B cell (primary cell): ENCODE measurements at regions of chr19 and their contacts with region 1.

Region 1: DNA sequence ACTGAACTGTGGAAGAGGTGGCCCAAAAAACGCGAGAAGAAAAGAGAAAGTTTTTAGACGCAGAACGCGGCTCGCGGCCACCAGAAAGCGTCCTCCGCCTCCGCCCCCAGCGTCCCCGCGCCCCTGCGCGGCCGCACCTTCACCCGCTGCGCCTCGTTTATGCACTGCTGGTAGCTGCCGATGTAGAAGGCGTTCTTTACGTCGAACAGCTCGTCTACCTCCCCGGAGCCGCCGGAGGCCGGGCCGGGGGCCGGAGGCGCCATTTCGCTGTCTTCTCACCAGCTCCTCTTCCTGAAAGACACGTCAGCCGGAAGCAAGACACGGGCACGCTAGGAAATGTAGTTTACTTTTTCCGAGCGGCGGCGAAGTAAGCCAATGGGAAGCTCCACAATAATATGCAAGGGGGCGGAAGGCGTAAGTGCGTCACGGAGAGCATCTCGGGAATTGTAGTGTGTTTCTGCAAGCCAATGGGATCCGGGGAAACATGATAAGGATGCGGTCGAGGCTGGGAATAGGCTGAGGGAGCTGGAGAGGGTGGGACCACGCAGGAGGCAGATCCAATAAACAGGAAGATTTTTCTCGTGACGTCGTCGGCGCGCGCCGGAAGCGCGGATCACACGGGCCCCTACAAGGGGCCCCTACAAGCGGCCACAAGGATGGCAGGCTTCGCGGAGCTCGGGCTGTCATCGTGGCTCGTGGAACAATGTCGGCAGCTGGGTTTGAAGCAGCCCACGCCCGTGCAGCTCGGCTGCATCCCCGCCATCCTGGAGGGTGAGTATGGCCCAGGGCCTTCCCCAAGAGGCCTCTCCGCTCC is at the starts of genes COPE and DDX49:
- DNase-seq: peak; percentile 100
- ATAC-seq: peak; percentile 97
- H3K4me3 ChIP-seq: peak within 1 kb of the TSS; percentile 93 to 100 (median 97)
- H3K4me3 Mint-ChIP-seq: peak within 1 kb of the TSS; percentile 83
- H3K27ac ChIP-seq: peak within 1 kb of the TSS; percentile 84 to 93
- H3K27ac Mint-ChIP-seq: peak within 1 kb of the TSS; percentile 80
- H3K4me1 ChIP-seq: peaks cover 17 to 27% of the 10 kb centered on the region in 2 donors
- H3K4me1 Mint-ChIP-seq: peaks cover 41% of the 10 kb centered on the region
- H3K27me3 ChIP-seq: no peaks in the 10 kb centered on the region
- H3K27me3 Mint-ChIP-seq: no peaks in the 10 kb centered on the region
- CTCF ChIP-seq: no peak
- total RNA-seq, gene COPE: 153 and 154 TPM in 2 replicates
- total RNA-seq, gene DDX49: 38.9 and 39.5 TPM in 2 replicates

Region 2: DNA sequence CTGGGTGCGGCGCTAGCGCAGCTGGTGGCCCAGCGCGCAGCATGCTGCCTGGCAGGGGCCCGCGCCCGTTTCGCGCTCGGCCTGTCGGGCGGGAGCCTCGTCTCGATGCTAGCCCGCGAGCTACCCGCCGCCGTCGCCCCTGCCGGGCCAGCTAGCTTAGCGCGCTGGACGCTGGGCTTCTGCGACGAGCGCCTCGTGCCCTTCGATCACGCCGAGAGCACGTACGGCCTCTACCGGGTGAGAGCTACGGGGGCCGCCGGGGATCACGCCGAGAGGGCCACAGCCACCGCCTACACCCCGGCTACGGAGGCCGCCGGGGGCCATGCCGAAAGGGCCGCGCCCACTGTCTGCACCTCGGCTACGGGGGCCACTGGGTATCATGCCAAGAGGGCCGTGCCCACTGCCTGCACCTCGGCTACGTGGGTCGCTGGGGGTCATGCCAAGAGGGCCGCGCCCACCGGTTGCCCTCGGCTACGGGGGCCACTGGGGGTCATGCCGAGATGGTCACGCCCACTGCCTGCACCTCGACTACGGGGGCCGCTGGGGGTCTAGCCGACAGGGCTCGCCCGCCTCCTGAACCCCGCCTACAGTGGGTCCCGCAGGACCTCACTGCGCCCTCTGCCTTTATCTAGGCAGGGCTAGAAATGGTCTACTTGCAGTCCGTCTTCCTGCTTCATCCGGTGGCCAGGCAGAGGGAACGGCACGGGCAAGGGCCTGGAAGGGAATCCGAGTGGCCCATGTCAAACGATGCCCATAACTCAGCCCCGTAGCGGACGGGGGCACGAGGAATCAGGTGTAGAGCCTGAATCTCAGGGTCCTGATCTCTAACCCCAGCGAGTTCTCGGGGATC is 1407.3 kb before region 1 on chr19:
- CTCF ChIA-PET with region 1: no interaction called
- POLR2A ChIA-PET with region 1: no interaction called
- intact Hi-C with region 1: loop called (anchors 5 kb)
- DNase-seq: peak; percentile 96
- ATAC-seq: peak; percentile 84
- H3K4me3 ChIP-seq: peak overlapping the region; percentile 68 to 98 (median 85)
- H3K4me3 Mint-ChIP-seq: peak overlapping the region; percentile 96
- H3K27ac ChIP-seq: peak overlapping the region; percentile 82 to 94
- H3K27ac Mint-ChIP-seq: peak overlapping the region; percentile 95
- H3K4me1 ChIP-seq: peaks cover 18 to 24% of the 10 kb centered on the region in 2 donors
- H3K4me1 Mint-ChIP-seq: peaks cover 40% of the 10 kb centered on the region
- H3K27me3 ChIP-seq: no peaks in the 10 kb centered on the region
- H3K27me3 Mint-ChIP-seq: no peaks in the 10 kb centered on the region
- CTCF ChIP-seq: peak; percentile 38

Region 3: DNA sequence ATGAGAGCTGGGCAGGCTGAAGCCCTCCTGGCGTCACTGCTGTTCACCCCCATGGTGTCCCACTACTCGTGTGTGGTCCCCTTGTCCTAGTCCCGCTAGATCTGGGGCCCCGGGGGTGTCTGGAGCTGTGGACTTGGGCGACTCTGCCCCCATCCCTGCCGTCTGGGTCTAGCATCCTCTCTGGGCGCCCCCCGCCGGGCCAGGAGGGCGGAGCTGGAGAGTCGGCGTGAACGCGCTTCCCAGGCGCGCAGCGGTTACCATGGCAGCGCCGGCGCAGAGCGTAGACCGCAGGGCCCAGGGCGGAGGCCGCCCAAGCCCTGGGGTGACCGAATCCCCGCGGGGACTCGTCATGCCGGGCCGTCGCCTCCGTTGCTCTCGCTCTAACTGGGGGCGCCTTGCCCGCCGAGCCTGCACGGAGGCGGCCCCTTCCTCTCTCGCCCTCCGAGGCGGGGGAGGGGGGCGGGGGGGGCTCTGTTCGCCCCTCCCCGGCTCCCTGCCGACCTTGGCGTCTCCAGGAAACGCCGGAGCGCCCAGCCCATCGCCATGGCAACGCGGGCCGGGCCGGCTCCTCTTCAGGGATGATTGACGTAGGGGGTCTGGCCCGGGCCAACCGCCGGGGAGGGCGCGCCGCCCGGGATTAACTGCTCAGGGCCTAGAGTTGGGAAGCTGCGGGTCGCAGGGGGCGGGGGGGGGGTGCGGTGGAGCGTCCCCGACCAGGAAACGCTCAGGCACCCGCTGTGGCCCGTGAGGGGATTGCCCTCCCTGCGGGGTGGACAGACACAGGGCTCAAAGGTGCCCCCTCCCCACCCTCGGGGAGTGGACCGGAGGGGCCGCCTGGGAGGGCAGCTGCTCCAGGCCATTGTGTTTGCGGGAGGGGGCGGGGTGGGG is 490.3 kb before region 1 on chr19:
- CTCF ChIA-PET with region 1: no interaction called
- POLR2A ChIA-PET with region 1: no interaction called
- intact Hi-C with region 1: loop called (anchors 1 kb)
- DNase-seq: peak; percentile 96
- ATAC-seq: peak; percentile 81
- H3K4me3 ChIP-seq: peak overlapping the region in 4 of 5 experiments; percentile 54 to 61 (median 58)
- H3K4me3 Mint-ChIP-seq: peak overlapping the region; percentile 78
- H3K27ac ChIP-seq: peak overlapping the region; percentile 85 to 89
- H3K27ac Mint-ChIP-seq: peak overlapping the region; percentile 86
- H3K4me1 ChIP-seq: peaks cover 24 to 39% of the 10 kb centered on the region in 2 donors
- H3K4me1 Mint-ChIP-seq: peaks cover 21% of the 10 kb centered on the region
- H3K27me3 ChIP-seq: no peaks in the 10 kb centered on the region
- H3K27me3 Mint-ChIP-seq: no peaks in the 10 kb centered on the region
- CTCF ChIP-seq: no peak

Region 4: DNA sequence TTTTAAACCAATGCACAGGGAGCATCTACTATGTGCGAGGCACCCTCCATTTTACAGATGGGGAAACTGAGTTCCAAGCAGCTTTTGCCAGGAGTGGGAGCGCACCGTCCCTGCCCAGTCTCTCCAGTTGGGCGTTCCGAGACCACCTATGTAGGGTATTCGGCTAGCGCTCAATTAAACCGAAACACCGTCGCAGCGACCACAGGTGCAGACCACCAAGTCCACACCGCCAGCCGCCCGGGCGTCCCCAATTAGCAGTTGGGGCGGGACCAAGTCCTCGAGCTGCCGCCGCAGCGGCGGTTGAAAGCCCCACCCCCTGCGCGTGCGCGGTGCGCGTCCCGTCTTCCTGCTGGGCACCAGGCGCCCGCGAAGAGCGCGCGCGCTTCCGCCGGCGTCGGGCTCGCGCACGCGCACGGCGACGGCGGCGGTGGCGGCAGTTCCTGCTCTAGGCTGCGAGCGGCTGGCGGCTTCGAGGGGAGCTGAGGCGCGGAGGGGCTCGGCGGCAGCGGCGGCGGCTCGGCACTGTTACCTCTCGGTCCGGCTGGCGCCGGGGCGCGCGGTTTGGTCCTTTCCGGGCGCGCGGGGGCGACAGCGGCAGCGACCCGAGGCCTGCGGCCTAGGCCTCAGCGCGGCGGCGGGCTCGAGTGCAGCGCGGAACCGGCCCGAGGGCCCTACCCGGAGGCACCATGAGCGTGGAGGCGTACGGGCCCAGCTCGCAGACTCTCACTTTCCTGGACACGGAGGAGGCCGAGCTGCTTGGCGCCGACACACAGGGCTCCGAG is 87.6 kb before region 1 on chr19 and contains the start of gene UPF1:
- CTCF ChIA-PET with region 1: no interaction called
- POLR2A ChIA-PET with region 1: no interaction called
- intact Hi-C with region 1: loop called (anchors 5 kb)
- DNase-seq: peak; percentile 97
- ATAC-seq: peak; percentile 81
- H3K4me3 ChIP-seq: peak within 1 kb of the TSS; percentile 63 to 82 (median 73)
- H3K4me3 Mint-ChIP-seq: peak within 1 kb of the TSS; percentile 91
- H3K27ac ChIP-seq: peak within 1 kb of the TSS; percentile 60 to 90
- H3K27ac Mint-ChIP-seq: peak within 1 kb of the TSS; percentile 92
- H3K4me1 ChIP-seq: peaks cover 34 to 39% of the 10 kb centered on the region in 2 donors
- H3K4me1 Mint-ChIP-seq: peaks cover 36% of the 10 kb centered on the region
- H3K27me3 ChIP-seq: no peaks in the 10 kb centered on the region
- H3K27me3 Mint-ChIP-seq: peaks cover 8% of the 10 kb centered on the region
- CTCF ChIP-seq: no peak
- total RNA-seq, gene UPF1: 95.1 and 98.6 TPM in 2 replicates

Region 5: GRCh38 chr19:18932216-18932841 is 13.0 kb after region 1 on chr19:
- CTCF ChIA-PET with region 1: no interaction called
- POLR2A ChIA-PET with region 1: interaction called, 3 read pairs
- intact Hi-C with region 1: loop called (anchors 1 kb)
- DNase-seq: peak; percentile 85
- ATAC-seq: peak; percentile 97
- H3K4me3 ChIP-seq: peak overlapping the region in 4 of 5 experiments; percentile 21 to 46 (median 40)
- H3K4me3 Mint-ChIP-seq: peak overlapping the region; percentile 83
- H3K27ac ChIP-seq: no peak overlapping the region
- H3K27ac Mint-ChIP-seq: no peak overlapping the region
- H3K4me1 ChIP-seq: peaks cover 7 to 14% of the 10 kb centered on the region in 2 donors
- H3K4me1 Mint-ChIP-seq: peaks cover 9% of the 10 kb centered on the region
- H3K27me3 ChIP-seq: peaks cover 0 to 20% (median 5%) of the 10 kb centered on the region in 4 experiments
- H3K27me3 Mint-ChIP-seq: peaks cover 7% of the 10 kb centered on the region
- CTCF ChIP-seq: no peak

Region 6: DNA sequence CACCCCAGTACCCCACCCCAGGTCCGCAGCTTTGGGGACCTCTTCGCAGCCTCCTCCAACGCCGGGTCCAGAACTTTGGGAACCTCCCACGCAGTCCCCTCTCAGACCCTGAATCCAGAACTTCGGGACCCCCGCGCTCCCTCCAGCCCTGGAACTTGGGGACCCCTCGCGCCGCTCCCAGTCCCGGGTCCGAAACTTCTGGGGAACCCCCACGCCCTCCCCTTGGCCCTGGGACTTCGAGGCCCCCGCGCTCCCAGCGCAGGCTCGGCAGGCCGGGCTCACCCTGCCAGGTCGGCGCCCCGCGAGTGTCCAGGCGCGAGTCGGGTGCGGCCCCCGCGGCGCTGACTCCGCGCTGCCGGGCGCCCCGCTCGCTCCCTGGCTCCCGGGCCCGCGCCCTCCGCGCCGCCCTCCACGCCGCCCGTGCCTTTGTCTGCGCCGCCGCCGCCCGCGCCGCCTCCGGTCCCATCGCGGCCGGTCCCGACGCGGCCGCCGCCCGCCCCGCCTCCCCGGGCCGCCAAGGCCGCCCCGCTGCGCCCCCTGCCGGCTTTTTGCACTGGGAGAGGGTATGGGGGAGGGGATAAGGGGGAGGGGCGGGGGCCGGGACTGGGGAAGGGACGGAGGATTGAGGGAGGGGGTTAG is 21.6 kb after region 1 on chr19 and contains the start of gene HOMER3:
- CTCF ChIA-PET with region 1: no interaction called
- POLR2A ChIA-PET with region 1: no interaction called
- intact Hi-C with region 1: loop called (anchors 2 kb)
- DNase-seq: peak; percentile 82
- ATAC-seq: peak; percentile 89
- H3K4me3 ChIP-seq: peak within 1 kb of the TSS; percentile 15 to 67 (median 49)
- H3K4me3 Mint-ChIP-seq: peak within 1 kb of the TSS; percentile 81
- H3K27ac ChIP-seq: no peak within 1 kb of the TSS
- H3K27ac Mint-ChIP-seq: no peak within 1 kb of the TSS
- H3K4me1 ChIP-seq: peaks cover 16 to 20% of the 10 kb centered on the region in 2 donors
- H3K4me1 Mint-ChIP-seq: peaks cover 20% of the 10 kb centered on the region
- H3K27me3 ChIP-seq: peaks cover 0 to 26% (median 6%) of the 10 kb centered on the region in 4 experiments
- H3K27me3 Mint-ChIP-seq: peaks cover 28% of the 10 kb centered on the region
- CTCF ChIP-seq: no peak
- total RNA-seq, gene HOMER3: 4.7 and 5.9 TPM in 2 replicates

Region 7: DNA sequence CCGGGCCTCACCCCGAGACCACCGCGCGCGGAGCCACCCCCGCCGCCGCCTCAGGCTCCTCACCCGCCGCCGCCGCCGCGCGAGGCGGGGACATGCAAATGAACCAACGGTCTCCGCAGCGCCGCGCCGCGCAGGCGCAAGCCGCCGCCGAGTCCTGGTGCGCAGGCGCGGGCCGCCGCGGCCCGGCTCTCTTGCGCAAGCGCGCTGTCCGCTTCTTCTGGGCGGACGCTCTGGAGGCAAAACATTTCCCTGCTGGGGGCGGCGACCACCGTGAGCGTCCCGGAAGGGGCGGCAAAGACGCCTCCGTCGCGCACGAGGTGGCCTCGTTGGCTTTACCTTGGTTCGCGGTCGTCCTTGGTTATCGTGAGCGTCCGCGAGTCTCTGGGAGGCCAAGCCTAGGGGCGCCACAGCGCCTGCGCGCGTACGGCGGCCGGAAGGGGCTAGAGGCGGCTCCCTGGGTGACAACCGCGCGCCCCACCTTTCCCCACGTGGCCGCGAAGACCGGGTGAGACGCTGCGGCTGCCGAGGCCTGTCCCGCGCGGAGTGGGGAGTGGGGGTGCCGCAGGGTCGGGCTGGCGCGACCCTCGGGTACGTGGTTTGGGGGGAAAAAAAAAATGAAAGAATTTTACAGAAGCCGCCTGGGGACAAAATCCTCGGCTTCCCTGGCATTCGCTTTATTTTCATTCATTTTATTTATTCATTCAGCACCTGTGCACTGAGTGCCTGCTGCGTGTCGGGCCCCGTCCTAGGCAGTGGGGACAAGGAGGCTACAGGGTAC is 114.3 kb after region 1 on chr19 and contains the starts of genes ARMC6 and SUGP2:
- CTCF ChIA-PET with region 1: no interaction called
- POLR2A ChIA-PET with region 1: no interaction called
- intact Hi-C with region 1: loop called (anchors 1 kb)
- DNase-seq: peak; percentile 98
- ATAC-seq: peak; percentile 82
- H3K4me3 ChIP-seq: peak within 1 kb of the TSS; percentile 68 to 84 (median 74)
- H3K4me3 Mint-ChIP-seq: peak within 1 kb of the TSS; percentile 96
- H3K27ac ChIP-seq: peak within 1 kb of the TSS; percentile 65 to 76
- H3K27ac Mint-ChIP-seq: peak within 1 kb of the TSS; percentile 93
- H3K4me1 ChIP-seq: peaks cover 18 to 24% of the 10 kb centered on the region in 2 donors
- H3K4me1 Mint-ChIP-seq: peaks cover 26% of the 10 kb centered on the region
- H3K27me3 ChIP-seq: no peaks in the 10 kb centered on the region
- H3K27me3 Mint-ChIP-seq: no peaks in the 10 kb centered on the region
- CTCF ChIP-seq: no peak
- total RNA-seq, gene ARMC6: 15.2 TPM in 2 replicates
- total RNA-seq, gene SUGP2: 154 and 164 TPM in 2 replicates